ENCODE measurements at regions of chr9 and their contacts with region 1.

Region 1: DNA sequence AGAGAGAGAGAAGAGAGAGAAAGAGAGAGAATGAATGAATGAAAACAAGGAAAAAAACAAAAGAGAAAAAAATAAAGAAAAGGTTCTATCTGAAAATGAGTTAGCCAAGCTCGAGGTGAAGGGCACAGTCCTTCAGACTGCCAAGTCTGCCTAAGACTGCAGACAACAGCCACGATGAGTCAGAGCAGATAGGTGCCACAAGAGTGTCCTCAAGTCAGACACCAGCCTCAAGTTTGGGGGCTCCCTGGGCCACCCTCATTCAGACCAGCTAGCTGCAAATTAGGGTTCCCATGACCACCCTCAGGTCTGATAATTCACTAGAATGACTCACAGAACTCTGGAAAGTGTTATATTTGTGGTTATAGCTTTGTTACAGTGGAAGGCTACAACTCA is 13.9 kb upstream of the HABP4 start:
- DNase-seq: no peak
- H3K4me3 ChIP-seq: no peak overlapping the region
- H3K27ac ChIP-seq: no peak overlapping the region
- H3K4me1 ChIP-seq: no peaks in the 10 kb centered on the region
- H3K27me3 ChIP-seq: no peaks in the 10 kb centered on the region
- CTCF ChIP-seq: no peak
- POLR2A ChIP-seq: no peak

Region 2: DNA sequence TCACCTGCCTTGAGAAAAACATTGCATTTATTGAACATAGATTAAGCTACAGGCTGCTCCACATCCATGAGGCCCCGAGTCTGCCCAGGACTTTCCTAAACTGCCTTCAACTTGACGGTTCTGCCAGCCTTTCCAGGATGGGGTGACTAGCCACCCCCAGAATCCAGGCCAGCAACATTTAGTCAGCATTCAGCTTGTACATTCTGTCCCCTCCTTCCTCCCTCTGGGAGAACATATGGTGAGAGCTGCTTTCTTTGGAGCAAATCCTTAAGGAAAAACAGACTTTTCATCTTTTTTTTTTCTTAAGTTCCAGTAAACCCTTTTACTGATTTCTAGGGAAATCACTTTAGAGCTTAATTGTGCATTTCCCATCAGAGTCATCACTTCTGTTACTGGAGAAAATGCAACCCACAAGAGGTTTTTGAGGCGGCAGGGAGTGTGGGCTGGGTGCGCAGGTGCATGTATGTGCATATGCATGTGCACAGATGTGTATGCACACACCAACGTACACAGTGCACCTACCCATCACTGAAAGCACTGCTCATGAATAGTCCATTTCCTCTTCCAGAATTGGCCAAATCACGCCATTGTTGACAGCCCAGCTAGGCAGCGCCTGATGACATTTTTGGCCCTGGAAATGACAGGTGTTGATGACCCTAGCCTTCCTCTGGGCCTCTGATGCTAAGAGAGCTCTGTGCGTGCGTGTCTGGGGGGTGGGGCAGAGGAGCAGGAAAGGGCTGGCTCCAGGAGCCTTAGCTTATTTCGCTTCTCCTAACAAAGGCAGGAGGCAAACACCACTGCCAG is 279.7 kb before region 1 on chr9:
- intact Hi-C with region 1: no loop called
- DNase-seq: no peak
- H3K4me3 ChIP-seq: no peak overlapping the region
- H3K27ac ChIP-seq: peak overlapping the region in 1 of 4 donors; percentile 57
- H3K4me1 ChIP-seq: peaks cover 0 to 26% (median 8%) of the 10 kb centered on the region in 3 donors
- H3K27me3 ChIP-seq: peaks cover 0 to 24% (median 0%) of the 10 kb centered on the region in 4 donors
- CTCF ChIP-seq: no peak
- POLR2A ChIP-seq: no peak

Region 3: GRCh38 chr9:96344458-96345180 is 91.4 kb before region 1 on chr9:
- intact Hi-C with region 1: no loop called
- DNase-seq: peak; percentile 6
- H3K4me3 ChIP-seq: no peak overlapping the region
- H3K27ac ChIP-seq: peak overlapping the region in 3 of 4 donors; percentile 63 to 83 (median 74)
- H3K4me1 ChIP-seq: peaks cover 8 to 38% (median 16%) of the 10 kb centered on the region in 3 donors
- H3K27me3 ChIP-seq: no peaks in the 10 kb centered on the region
- CTCF ChIP-seq: no peak
- POLR2A ChIP-seq: no peak

Region 4: DNA sequence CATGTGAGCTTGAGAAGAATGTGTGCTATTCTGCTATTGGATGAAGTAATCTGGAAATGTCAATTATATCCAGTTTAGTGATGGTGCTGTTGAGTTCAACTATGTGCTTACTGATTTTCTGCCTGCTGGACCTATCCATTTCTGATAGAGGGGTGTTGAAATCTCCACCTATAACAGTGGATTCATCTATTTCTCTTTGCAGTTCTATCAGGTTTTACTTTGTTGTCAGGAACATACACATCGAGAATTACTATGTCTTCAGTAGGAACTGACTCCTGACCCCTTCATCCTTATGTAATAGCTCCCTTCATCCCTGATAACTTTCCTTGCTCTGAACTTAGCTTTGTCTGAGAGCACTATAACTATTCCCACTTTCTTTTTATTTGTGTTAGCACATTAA is 200.3 kb after region 1 on chr9:
- intact Hi-C with region 1: no loop called
- DNase-seq: no peak
- H3K4me3 ChIP-seq: no peak overlapping the region
- H3K27ac ChIP-seq: no peak overlapping the region
- H3K4me1 ChIP-seq: no peaks in the 10 kb centered on the region
- H3K27me3 ChIP-seq: peaks cover 0 to 11% (median 0%) of the 10 kb centered on the region in 4 donors
- CTCF ChIP-seq: no peak
- POLR2A ChIP-seq: no peak

Region 5: GRCh38 chr9:96661711-96662110 is 225.7 kb after region 1 on chr9:
- intact Hi-C with region 1: loop called (anchors 10 kb)
- DNase-seq: no peak
- H3K4me3 ChIP-seq: no peak overlapping the region
- H3K27ac ChIP-seq: no peak overlapping the region
- H3K4me1 ChIP-seq: peaks cover 0 to 10% (median 0%) of the 10 kb centered on the region in 3 donors
- H3K27me3 ChIP-seq: no peaks in the 10 kb centered on the region
- CTCF ChIP-seq: no peak
- POLR2A ChIP-seq: no peak

Measured in esophagus squamous epithelium (tissue), 5 donors.